ENCODE measurements at regions of chr11 and their contacts with region 1.

Region 1: DNA sequence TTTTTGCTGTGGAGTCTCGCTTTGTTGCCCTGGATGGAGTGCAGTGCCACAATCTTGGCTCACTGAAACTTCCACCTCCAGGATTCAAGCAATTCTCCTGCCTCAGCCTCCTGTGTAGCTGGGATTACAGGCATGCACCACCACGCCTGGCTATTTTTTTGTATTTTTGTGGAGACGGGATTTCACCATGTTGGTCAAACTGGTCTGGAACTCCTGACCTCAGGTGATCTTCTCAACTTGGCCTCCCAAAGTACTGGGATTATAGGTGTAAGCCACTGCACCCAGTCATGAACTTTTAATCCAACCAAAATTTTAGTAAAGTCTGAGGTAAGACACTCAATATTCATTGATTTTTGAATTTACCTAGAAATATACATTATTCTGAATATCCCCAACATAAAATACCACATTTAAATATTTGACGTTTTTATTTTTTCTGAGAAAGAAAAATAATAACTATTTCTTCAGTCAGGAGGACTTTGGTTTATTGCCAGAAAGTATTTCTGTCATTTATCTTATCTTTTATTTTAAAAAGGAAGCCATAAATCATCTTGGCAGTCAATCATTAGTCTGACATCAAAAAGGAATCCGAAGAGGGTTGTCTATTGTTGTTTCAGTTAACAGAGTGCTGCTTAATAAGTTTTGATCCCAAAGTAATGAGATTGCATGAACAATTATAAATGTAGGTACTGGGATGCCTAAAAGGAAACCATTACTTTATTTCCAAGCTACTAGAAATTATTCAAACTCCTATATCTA is 102.2 kb upstream of the GRIA4 start:
- DNase-seq: peak; percentile 82 to 87
- H3K4me3 ChIP-seq: no peak overlapping the region
- H3K4me3 Mint-ChIP-seq: peak overlapping the region; percentile 43
- H3K27ac Mint-ChIP-seq: peak overlapping the region; percentile 59
- H3K4me1 ChIP-seq: peaks cover 37% of the 10 kb centered on the region
- H3K4me1 Mint-ChIP-seq: peaks cover 17% of the 10 kb centered on the region
- H3K27me3 ChIP-seq: no peaks in the 10 kb centered on the region
- H3K27me3 Mint-ChIP-seq: no peaks in the 10 kb centered on the region
- CTCF ChIP-seq: no peak

Region 2: GRCh38 chr11:105456950-105457349 is 50.7 kb before region 1 on chr11:
- CTCF ChIA-PET with region 1: no interaction called
- POLR2A ChIA-PET with region 1: no interaction called
- intact Hi-C with region 1: no loop called
- DNase-seq: peak in 1 of 2 experiments; percentile 40
- H3K4me3 ChIP-seq: no peak overlapping the region
- H3K4me3 Mint-ChIP-seq: no peak overlapping the region
- H3K27ac Mint-ChIP-seq: no peak overlapping the region
- H3K4me1 ChIP-seq: no peaks in the 10 kb centered on the region
- H3K4me1 Mint-ChIP-seq: no peaks in the 10 kb centered on the region
- H3K27me3 ChIP-seq: no peaks in the 10 kb centered on the region
- H3K27me3 Mint-ChIP-seq: no peaks in the 10 kb centered on the region
- CTCF ChIP-seq: peak; percentile 16 to 28

Region 3: DNA sequence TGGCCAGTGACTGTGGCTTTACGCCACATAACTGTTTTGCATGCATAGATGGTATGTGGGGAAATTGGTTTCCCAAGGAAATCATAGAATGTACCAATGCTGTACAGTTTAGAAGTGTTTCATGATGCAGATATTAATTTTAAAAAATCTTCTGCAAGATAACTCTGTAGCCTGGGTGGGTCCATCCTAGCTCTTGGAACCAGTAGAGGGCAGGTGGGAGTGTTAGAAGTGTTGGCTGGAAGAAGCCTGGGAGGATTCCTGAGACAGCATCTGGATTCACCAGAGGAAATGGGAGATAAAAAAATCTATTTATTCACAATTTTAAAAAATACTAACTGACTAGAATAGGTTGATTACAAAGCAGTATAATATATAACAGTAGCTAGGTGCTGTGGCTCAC is 37.7 kb before region 1 on chr11:
- CTCF ChIA-PET with region 1: no interaction called
- POLR2A ChIA-PET with region 1: no interaction called
- intact Hi-C with region 1: loop called (anchors 2 kb)
- DNase-seq: peak in 1 of 2 experiments; percentile 33
- H3K4me3 ChIP-seq: no peak overlapping the region
- H3K4me3 Mint-ChIP-seq: no peak overlapping the region
- H3K27ac Mint-ChIP-seq: no peak overlapping the region
- H3K4me1 ChIP-seq: no peaks in the 10 kb centered on the region
- H3K4me1 Mint-ChIP-seq: peaks cover 10% of the 10 kb centered on the region
- H3K27me3 ChIP-seq: no peaks in the 10 kb centered on the region
- H3K27me3 Mint-ChIP-seq: peaks cover 2% of the 10 kb centered on the region
- CTCF ChIP-seq: peak in 1 of 2 experiments; percentile 40

Region 4: DNA sequence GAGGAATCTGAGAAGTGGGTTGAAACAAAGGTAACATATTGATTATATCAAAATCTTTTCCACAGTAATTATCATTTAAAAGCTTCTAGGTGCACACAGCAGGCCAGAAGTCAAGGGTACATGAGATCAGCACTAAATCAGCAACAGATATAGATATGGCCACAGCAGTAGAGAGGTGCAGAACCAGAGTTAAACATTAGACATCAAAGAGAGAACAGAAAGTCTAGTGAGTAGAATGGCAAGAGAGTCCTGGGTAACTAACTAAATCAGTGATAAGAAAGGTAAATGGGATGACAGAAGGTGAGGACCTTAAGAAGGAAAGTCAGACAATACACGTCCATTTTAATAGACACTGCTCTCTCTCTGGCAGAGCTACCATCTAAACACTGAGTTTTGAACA is 17.3 kb before region 1 on chr11:
- CTCF ChIA-PET with region 1: no interaction called
- POLR2A ChIA-PET with region 1: interaction called, 4 read pairs
- intact Hi-C with region 1: loop called (anchors 1 kb)
- DNase-seq: peak in 1 of 2 experiments; percentile 39
- H3K4me3 ChIP-seq: no peak overlapping the region
- H3K4me3 Mint-ChIP-seq: no peak overlapping the region
- H3K27ac Mint-ChIP-seq: peak overlapping the region; percentile 28
- H3K4me1 ChIP-seq: peaks cover 19% of the 10 kb centered on the region
- H3K4me1 Mint-ChIP-seq: peaks cover 30% of the 10 kb centered on the region
- H3K27me3 ChIP-seq: no peaks in the 10 kb centered on the region
- H3K27me3 Mint-ChIP-seq: no peaks in the 10 kb centered on the region
- CTCF ChIP-seq: no peak

Region 5: DNA sequence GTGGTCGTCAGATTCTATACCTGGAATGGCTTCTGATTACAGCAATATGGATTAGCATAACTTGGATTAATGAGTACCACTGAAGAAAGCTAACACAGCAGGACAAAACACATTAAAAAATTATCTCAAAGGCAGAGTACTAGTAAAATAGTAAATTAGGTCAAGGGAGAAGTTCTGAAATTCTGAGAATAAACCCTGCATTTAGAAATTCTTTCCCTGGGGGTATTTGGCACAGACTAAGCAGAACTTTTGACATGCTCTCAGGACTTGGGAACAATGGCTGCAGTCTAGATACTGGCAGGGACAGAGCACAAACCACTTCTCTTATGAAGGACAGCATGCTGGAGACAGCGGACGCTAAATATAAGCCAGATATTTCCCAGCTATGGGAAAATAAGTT is 16.6 kb after region 1 on chr11:
- CTCF ChIA-PET with region 1: no interaction called
- POLR2A ChIA-PET with region 1: no interaction called
- intact Hi-C with region 1: loop called (anchors 1 kb)
- DNase-seq: peak in 1 of 2 experiments; percentile 42
- H3K4me3 ChIP-seq: no peak overlapping the region
- H3K4me3 Mint-ChIP-seq: no peak overlapping the region
- H3K27ac Mint-ChIP-seq: no peak overlapping the region
- H3K4me1 ChIP-seq: peaks cover 13% of the 10 kb centered on the region
- H3K4me1 Mint-ChIP-seq: peaks cover 14% of the 10 kb centered on the region
- H3K27me3 ChIP-seq: no peaks in the 10 kb centered on the region
- H3K27me3 Mint-ChIP-seq: no peaks in the 10 kb centered on the region
- CTCF ChIP-seq: no peak

Region 6: DNA sequence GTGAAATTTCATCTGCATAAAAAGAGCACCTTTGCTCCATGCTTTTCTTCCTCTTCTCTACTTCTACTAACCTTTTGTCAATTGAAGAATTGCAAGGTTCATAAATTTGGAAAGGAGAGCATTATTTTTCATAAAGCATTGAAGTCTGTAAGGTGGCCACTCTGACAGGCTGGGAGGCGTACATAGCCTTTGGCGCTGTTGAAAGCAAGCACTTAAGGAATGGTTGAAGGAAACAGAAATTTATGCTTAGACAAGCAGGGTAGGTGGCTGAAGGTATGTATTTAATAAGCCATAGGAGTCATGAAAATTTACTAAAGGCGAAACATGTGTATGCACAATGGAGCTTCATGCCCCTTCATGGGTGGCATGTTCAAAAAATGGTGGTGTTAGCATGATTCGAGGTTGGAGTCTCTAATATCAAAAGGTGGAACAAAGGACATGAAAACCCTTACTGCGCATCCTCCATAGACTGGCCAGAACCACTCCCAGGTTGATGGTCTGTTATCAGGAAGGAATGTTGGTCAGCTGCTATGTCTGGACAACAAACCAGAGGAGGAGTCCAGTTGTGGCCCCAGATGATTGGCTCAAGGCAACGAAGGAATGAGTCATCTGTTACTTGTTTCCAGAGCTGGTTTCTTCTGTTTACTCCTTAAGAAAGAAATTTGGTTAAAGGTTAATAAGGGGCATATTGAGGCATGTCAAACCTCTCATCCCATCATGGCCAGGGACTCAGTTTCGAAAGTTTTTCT is 45.2 kb after region 1 on chr11:
- CTCF ChIA-PET with region 1: no interaction called
- POLR2A ChIA-PET with region 1: no interaction called
- intact Hi-C with region 1: loop called (anchors 1 kb)
- DNase-seq: peak; percentile 57 to 77
- H3K4me3 ChIP-seq: no peak overlapping the region
- H3K4me3 Mint-ChIP-seq: no peak overlapping the region
- H3K27ac Mint-ChIP-seq: peak overlapping the region; percentile 9
- H3K4me1 ChIP-seq: peaks cover 10% of the 10 kb centered on the region; the same call in 1 of the 2 replicates
- H3K4me1 Mint-ChIP-seq: peaks cover 21% of the 10 kb centered on the region
- H3K27me3 ChIP-seq: no peaks in the 10 kb centered on the region
- H3K27me3 Mint-ChIP-seq: no peaks in the 10 kb centered on the region
- CTCF ChIP-seq: no peak

Region 7: DNA sequence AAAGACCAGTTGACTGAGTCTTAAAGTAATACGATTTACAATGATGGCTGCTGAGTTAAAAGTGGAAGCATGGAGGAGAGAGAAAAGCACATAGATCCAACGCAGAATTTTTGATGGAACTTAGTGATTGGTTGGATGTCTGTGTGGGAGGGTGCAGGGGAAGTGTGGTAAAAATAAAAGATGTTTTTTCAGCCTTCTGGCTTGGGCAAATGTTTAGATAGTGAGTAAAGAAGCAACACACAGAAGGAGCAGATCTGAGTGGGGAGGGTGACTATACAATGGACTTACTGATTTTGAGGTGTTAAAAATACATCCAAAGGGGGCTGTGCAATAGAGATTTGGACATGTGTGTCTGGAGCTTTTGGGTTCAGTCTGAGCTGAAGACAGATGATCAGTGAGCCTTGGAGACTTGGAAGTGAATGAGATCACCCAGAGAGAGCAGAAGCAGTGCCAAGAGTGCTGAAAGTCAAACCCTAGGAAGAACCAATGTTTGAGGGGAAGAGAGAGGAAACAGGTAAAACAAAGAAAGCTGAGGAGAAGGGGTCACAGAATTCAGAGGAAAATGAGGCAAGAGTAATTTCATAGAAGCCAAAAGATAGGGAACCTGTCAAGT is 110.8 kb after region 1 on chr11:
- CTCF ChIA-PET with region 1: no interaction called
- POLR2A ChIA-PET with region 1: no interaction called
- intact Hi-C with region 1: no loop called
- DNase-seq: no peak
- H3K4me3 ChIP-seq: no peak overlapping the region
- H3K4me3 Mint-ChIP-seq: no peak overlapping the region
- H3K27ac Mint-ChIP-seq: no peak overlapping the region
- H3K4me1 ChIP-seq: no peaks in the 10 kb centered on the region
- H3K4me1 Mint-ChIP-seq: no peaks in the 10 kb centered on the region
- H3K27me3 ChIP-seq: no peaks in the 10 kb centered on the region
- H3K27me3 Mint-ChIP-seq: peaks cover 3% of the 10 kb centered on the region
- CTCF ChIP-seq: no peak

Measured in Caco-2 (cell line).